Activated CD4-positive, alpha-beta memory T cell treated with anti-CD3 and anti-CD28 coated beads for 36 hours (primary cell): ENCODE measurements at regions of chr17 and their contacts with region 1.

Region 1: DNA sequence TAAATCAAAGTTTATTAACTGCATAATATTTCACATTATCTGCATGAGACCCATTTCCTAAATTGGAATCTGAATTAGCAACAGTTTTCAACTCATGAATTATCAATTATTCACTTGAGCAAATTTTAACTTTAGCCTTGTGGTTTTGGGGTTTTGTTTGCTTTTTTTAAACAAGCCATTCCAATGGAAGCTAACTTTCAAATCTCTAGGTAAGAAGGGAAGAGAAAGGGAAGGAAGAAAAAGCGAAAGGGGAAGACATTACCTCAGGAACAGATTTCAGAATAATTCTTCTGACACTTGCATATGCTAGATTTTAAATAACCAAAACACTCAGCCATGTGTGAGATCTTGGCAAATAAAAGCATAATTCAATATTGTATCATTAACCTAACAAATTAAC is 102.7 kb downstream of the CA4 start:
- DNase-seq: no peak
- H3K4me3 Mint-ChIP-seq: no peak overlapping the region
- H3K27ac Mint-ChIP-seq: no peak overlapping the region
- H3K4me1 Mint-ChIP-seq: no peaks in the 10 kb centered on the region
- H3K27me3 Mint-ChIP-seq: no peaks in the 10 kb centered on the region

Region 2: DNA sequence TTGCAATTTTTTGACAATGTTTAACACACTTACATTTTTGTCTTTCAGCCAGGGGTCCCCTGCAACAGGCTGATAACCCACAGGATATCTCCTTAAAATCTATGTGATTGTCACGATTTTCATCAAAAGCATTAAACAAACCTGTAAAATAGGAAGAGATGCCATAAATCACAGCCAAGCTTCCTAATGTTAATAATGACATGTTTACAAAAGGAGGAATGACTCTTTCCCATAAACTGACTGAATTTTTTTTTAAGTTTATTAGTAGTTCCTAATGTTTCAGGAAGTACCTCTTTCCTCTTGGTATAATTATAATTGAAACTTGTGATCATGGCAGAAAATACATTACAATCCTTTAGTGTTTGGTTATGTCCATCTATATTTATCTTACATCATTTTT is 17.0 kb after region 1 on chr17:
- CTCF ChIA-PET with region 1: no interaction called
- POLR2A ChIA-PET with region 1: no interaction called
- intact Hi-C with region 1: loop called (anchors 1 kb)
- DNase-seq: no peak
- H3K4me3 Mint-ChIP-seq: no peak overlapping the region
- H3K27ac Mint-ChIP-seq: no peak overlapping the region
- H3K4me1 Mint-ChIP-seq: no peaks in the 10 kb centered on the region
- H3K27me3 Mint-ChIP-seq: no peaks in the 10 kb centered on the region

Region 3: GRCh38 chr17:60315650-60316049 is 63.2 kb after region 1 on chr17:
- CTCF ChIA-PET with region 1: no interaction called
- POLR2A ChIA-PET with region 1: no interaction called
- intact Hi-C with region 1: no loop called
- DNase-seq: no peak
- H3K4me3 Mint-ChIP-seq: no peak overlapping the region
- H3K27ac Mint-ChIP-seq: no peak overlapping the region
- H3K4me1 Mint-ChIP-seq: peaks cover 12% of the 10 kb centered on the region
- H3K27me3 Mint-ChIP-seq: no peaks in the 10 kb centered on the region

Region 4: DNA sequence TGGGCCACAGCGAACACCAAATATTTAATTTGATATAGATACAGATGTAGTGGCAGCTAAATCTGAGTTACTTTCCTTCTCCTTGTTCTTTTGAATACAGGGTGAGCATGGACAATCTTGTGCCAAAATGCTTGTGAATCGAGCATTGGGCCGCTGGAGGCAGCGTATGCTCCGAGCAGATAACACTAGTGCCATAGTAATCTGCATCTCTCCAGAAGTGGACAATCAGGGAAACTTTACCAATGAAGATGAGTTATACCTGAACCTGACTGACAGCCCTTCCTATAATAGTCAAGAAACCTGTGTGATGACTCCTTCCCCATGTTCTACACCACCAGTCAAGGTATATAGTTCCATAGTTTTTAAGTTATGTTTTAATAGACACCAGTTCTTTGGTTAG is 404.0 kb after region 1 on chr17:
- CTCF ChIA-PET with region 1: no interaction called
- POLR2A ChIA-PET with region 1: no interaction called
- intact Hi-C with region 1: no loop called
- DNase-seq: no peak
- H3K4me3 Mint-ChIP-seq: no peak overlapping the region
- H3K27ac Mint-ChIP-seq: no peak overlapping the region
- H3K4me1 Mint-ChIP-seq: peaks cover 23% of the 10 kb centered on the region
- H3K27me3 Mint-ChIP-seq: no peaks in the 10 kb centered on the region